ENCODE measurements at regions of chr16 and their contacts with region 1.

Region 1: GRCh38 chr16:66516808-66517585 is 32.9 kb downstream of the TK2 start:
- DNase-seq: peak; percentile 98 to 99
- ATAC-seq: peak; percentile 97 to 99
- H3K4me3 ChIP-seq: peak overlapping the region; percentile 26 to 51 (median 36)
- H3K27ac ChIP-seq: peak overlapping the region; percentile 90 to 97 (median 96)
- H3K4me1 ChIP-seq: peaks cover 40 to 69% of the 10 kb centered on the region in 2 donors
- H3K27me3 ChIP-seq: no peaks in the 10 kb centered on the region
- CTCF ChIP-seq: no peak
- POLR2A ChIP-seq: peak; percentile 65 to 82

Region 2: GRCh38 chr16:66502020-66502913 is 14.7 kb before region 1 on chr16:
- in situ Hi-C with region 1: no loop called
- intact Hi-C with region 1: loop called (anchors 2 kb)
- DNase-seq: peak; percentile 83 to 92
- ATAC-seq: peak; percentile 97 to 98
- H3K4me3 ChIP-seq: peak overlapping the region in 3 of 4 donors; percentile 5 to 24 (median 7)
- H3K27ac ChIP-seq: peak overlapping the region; percentile 53 to 89 (median 72)
- H3K4me1 ChIP-seq: peaks cover 23 to 27% of the 10 kb centered on the region in 2 donors
- H3K27me3 ChIP-seq: no peaks in the 10 kb centered on the region
- CTCF ChIP-seq: no peak
- POLR2A ChIP-seq: no peak

Region 3: DNA sequence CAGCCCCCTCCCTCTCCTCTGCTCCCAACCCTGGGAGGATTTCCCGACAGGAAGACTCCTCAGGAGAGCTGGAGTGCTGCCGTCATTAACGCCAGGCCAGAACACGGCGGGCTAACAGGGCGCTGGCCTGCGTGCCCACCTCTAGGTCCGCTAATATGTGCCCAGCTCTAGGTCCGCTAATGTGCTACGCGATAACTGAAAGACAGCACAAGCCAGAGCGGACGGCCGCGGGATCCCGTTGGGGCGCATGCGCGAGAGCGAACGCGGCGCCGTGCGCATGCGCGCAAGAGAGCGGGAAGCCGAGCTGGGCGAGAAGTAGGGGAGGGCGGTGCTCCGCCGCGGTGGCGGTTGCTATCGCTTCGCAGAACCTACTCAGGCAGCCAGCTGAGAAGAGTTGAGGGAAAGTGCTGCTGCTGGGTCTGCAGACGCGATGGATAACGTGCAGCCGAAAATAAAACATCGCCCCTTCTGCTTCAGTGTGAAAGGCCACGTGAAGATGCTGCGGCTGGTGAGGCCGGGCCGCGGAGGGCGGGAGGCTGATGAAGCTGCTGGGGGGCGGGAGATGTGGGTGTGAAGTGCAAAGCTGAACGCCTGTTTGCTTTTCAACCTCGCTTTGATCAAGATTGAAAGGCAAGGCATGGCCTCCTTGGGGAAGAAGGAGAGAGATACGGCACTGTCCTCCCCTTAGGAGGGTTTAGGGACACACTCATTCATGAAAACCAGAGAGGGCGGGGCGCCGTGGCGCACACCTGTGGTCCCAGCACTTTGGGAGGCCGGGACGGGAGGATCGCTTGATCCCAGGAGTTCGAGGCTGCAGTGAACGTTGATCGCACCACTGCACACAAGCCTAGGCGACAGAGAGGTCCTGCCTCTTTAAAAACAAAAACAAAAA is 35.5 kb after region 1 on chr16 and contains the start of gene CKLF:
- in situ Hi-C with region 1: loop called in 1 of 4 experiments (anchors 5 kb)
- intact Hi-C with region 1: loop called (anchors 2 kb)
- DNase-seq: peak; percentile 73 to 86
- ATAC-seq: peak; percentile 83 to 87
- H3K4me3 ChIP-seq: peak within 1 kb of the TSS; percentile 56 to 78 (median 71)
- H3K27ac ChIP-seq: peak within 1 kb of the TSS; percentile 86 to 96 (median 92)
- H3K4me1 ChIP-seq: peaks cover 32 to 33% of the 10 kb centered on the region in 2 donors
- H3K27me3 ChIP-seq: no peaks in the 10 kb centered on the region
- CTCF ChIP-seq: no peak
- POLR2A ChIP-seq: peak; percentile 52 to 65
- total RNA-seq, gene CKLF: 5.8 to 8.5 (median 6.9) TPM

Measured in gastrocnemius medialis (tissue), 4 donors.